ENCODE measurements at regions of chr1 and their contacts with region 1.

Region 1: GRCh38 chr1:172398970-172399755 is 21.3 kb upstream of the C1orf105 start:
- DNase-seq: peak in 3 of 6 donors; percentile 30 to 46 (median 32)
- ATAC-seq: peak; percentile 64 to 86 (median 84)
- H3K4me3 ChIP-seq: no peak overlapping the region
- H3K27ac ChIP-seq: peak overlapping the region in 2 of 4 donors; percentile 22 to 33
- H3K4me1 ChIP-seq: peaks cover 0 to 11% (median 8%) of the 10 kb centered on the region in 3 donors
- H3K27me3 ChIP-seq: no peaks in the 10 kb centered on the region
- CTCF ChIP-seq: peak in 2 of 4 donors; percentile 36

Region 2: DNA sequence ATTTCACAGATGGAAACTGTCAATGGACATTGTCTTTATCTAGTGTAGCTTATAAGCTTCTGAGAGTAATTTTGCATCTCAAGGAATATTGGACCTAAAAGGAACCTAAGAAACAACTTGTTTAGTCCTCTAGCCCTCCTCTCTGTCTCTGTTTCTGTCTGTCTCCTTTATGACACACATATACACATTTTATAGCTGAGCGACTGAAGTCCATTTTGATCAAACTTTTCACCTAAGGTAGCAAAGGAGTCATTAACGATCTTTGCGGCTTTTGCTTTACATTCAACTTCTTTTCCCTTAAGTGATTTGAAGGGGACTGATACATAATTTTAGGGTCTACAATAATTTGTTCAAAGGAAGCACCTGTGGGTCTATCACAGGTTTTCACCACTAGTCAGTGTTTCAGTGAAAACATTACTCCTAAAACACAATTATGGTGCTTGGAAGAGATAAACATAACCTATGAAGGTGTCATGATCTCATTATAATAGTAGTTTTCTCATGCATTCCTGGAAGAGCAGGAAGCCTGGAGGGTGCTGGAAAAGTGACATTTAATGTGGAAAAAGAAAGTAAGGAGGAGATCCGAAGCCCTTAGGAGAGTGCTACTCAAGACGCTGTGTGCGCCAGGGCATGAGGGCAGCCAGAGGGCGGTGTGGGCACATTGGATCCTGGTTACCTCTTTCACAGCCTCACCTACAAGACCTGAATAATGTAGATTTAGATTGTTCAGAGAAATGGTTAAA is 309.2 kb before region 1 on chr1:
- intact Hi-C with region 1: loop called in 1 of 3 experiments (anchors 5 kb)
- DNase-seq: peak; percentile 35 to 79 (median 57)
- ATAC-seq: peak; percentile 81 to 99 (median 96)
- H3K4me3 ChIP-seq: no peak overlapping the region
- H3K27ac ChIP-seq: no peak overlapping the region
- H3K4me1 ChIP-seq: peaks cover 0 to 6% (median 6%) of the 10 kb centered on the region in 3 donors
- H3K27me3 ChIP-seq: no peaks in the 10 kb centered on the region
- CTCF ChIP-seq: peak; percentile 20 to 67 (median 62)

Measured in pancreas (tissue), 10 donors.